ENCODE measurements at regions of chr20 and their contacts with region 1.

Region 1: DNA sequence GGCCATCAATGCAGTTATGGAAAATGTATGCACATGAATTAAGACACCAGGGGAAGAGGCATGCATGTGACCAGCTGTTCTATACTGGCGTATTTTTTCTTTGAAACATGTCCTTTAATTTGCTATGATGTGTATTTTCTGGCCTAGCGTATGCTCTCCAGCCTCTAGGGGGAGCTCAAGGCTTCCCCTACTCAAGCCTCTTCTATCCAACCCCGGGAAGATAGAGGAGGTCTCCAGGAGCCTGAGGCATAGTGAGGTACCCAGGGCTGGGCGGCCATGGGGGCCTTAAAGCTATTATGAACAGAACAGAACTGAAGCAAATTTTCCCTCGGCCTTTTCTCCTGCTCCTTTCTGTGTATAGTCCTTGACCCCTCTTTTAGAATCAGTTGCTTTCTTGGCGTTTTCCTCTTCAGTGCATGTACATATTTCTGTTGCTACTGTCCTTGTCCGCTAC is 528.9 kb downstream of the MAFB start:
- DNase-seq: peak; percentile 78
- H3K4me3 Mint-ChIP-seq: no peak overlapping the region
- H3K27ac Mint-ChIP-seq: no peak overlapping the region
- H3K4me1 Mint-ChIP-seq: no peaks in the 10 kb centered on the region
- H3K27me3 Mint-ChIP-seq: no peaks in the 10 kb centered on the region
- CTCF ChIP-seq: peak; percentile 78

Region 2: GRCh38 chr20:39070484-39071231 is 1089.5 kb before region 1 on chr20:
- CTCF ChIA-PET with region 1: no interaction called
- POLR2A ChIA-PET with region 1: no interaction called
- intact Hi-C with region 1: no loop called
- DNase-seq: peak; percentile 71
- H3K4me3 Mint-ChIP-seq: no peak overlapping the region
- H3K27ac Mint-ChIP-seq: no peak overlapping the region
- H3K4me1 Mint-ChIP-seq: peaks cover 16% of the 10 kb centered on the region
- H3K27me3 Mint-ChIP-seq: peaks cover 13% of the 10 kb centered on the region
- CTCF ChIP-seq: no peak

Region 3: DNA sequence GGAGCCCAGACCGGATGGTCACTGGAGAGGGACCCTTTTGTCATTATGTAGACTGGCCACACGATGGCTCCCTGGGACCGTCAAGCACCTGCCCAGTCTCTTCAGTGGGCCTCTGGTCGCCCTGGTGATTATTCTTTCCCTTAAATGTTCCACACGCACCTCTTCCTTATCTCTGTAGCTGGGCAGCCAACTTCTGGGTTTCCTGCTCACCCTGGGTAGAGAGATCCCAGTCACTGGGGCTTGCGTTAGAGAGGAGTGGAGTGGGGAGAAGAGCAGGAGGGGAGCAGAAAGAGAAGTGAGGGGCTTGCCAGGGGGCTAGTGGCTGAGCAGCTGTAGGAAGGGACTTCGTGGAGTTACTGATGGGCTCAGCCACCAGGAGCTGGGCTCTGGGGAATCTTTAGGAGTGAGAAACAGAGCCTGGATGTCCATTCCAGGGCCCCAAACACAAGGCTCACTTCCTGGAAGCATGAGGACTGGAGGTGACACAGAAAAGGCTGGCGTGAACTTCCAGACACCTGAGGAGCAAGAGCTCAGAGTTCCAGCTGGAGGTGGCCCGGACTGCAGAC is 1047.9 kb before region 1 on chr20:
- CTCF ChIA-PET with region 1: interaction called, 8 read pairs
- POLR2A ChIA-PET with region 1: no interaction called
- intact Hi-C with region 1: loop called (anchors 10 kb)
- DNase-seq: peak; percentile 50
- H3K4me3 Mint-ChIP-seq: no peak overlapping the region
- H3K27ac Mint-ChIP-seq: no peak overlapping the region
- H3K4me1 Mint-ChIP-seq: peaks cover 5% of the 10 kb centered on the region
- H3K27me3 Mint-ChIP-seq: peaks cover 36% of the 10 kb centered on the region
- CTCF ChIP-seq: peak; percentile 88

Region 4: DNA sequence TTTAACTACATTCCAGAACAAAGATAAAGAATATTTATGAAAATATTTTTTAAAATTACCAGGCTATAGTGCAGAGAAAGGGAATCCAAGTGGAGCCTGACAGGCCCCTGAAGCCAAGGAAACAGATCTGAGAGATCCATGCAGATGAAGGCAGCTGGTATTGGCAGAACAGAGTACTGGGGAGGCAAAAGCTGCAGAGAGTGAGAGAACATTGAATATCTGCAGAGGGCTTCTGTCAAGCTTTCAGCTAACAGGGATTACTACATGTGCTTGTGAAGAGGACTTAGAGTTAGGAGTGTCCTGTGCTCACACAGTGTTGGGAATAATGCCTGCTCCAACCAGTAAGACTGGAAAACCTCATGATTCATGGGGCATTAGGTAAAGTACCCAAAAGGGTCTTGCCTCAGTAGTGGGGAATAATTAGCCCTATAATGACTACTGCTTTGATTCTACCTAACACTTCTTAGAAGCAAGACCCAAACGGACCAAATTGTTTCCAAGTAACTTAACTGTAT is 540.8 kb before region 1 on chr20:
- CTCF ChIA-PET with region 1: no interaction called
- POLR2A ChIA-PET with region 1: no interaction called
- intact Hi-C with region 1: no loop called
- DNase-seq: no peak
- H3K4me3 Mint-ChIP-seq: no peak overlapping the region
- H3K27ac Mint-ChIP-seq: no peak overlapping the region
- H3K4me1 Mint-ChIP-seq: peaks cover 17% of the 10 kb centered on the region
- H3K27me3 Mint-ChIP-seq: no peaks in the 10 kb centered on the region
- CTCF ChIP-seq: no peak

Region 5: GRCh38 chr20:40046703-40047102 is 113.4 kb before region 1 on chr20:
- CTCF ChIA-PET with region 1: no interaction called
- POLR2A ChIA-PET with region 1: no interaction called
- intact Hi-C with region 1: no loop called
- DNase-seq: no peak
- H3K4me3 Mint-ChIP-seq: no peak overlapping the region
- H3K27ac Mint-ChIP-seq: no peak overlapping the region
- H3K4me1 Mint-ChIP-seq: peaks cover 6% of the 10 kb centered on the region
- H3K27me3 Mint-ChIP-seq: no peaks in the 10 kb centered on the region
- CTCF ChIP-seq: no peak

Region 6: DNA sequence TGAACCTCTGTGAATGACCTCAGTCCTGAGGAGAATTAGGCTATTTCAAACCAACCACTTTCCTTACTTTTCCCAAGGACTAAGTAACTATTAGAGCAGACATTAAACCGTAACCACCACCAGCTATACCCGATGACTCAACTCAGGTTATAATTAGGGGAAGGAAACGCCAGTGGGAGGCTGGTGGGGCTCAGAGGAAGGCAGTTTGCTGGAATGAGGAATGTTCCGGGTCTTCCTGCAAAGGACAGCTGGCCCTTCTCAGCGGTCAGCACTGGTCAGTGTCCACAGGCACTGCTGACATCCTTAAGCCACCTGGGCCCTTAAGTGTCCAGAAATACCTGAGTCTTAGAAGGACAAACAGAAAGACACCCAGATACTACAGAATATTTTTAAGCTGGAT is 13.7 kb after region 1 on chr20:
- CTCF ChIA-PET with region 1: interaction called, 29 read pairs
- POLR2A ChIA-PET with region 1: interaction called, 5 read pairs
- intact Hi-C with region 1: no loop called
- DNase-seq: no peak
- H3K4me3 Mint-ChIP-seq: no peak overlapping the region
- H3K27ac Mint-ChIP-seq: no peak overlapping the region
- H3K4me1 Mint-ChIP-seq: no peaks in the 10 kb centered on the region
- H3K27me3 Mint-ChIP-seq: no peaks in the 10 kb centered on the region
- CTCF ChIP-seq: no peak

Region 7: DNA sequence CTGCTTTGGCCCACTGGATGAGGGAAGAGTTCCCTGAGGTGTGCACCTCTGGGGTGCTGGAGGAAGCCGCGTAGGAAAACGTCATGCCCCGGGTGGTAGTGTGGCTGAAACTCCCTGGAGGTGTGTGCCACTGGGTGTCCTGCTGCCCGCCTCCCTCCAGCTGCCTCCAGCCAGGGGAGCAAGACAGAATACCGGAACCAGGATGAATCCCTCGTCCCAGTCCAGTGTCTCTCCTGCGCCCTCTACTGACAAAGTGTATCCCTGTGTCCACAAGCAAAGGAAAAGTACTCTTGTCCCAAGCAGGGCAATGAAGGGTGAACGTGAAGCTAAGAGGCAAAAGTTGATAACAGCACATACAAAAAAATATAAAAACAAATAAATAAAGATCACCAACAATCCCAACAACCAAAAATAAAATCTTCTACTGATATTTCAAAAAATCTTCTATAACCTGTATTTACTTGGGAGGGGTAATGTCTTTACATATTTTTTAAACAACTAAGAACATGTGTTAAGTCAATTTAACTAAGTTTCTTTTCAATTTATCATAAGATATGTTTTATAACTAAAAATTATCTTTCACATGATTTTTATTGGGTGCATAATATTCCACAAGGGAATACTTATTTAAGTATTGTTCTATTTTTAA is 91.3 kb after region 1 on chr20:
- CTCF ChIA-PET with region 1: interaction called, 10 read pairs
- POLR2A ChIA-PET with region 1: no interaction called
- intact Hi-C with region 1: loop called (anchors 10 kb)
- DNase-seq: peak; percentile 76
- H3K4me3 Mint-ChIP-seq: no peak overlapping the region
- H3K27ac Mint-ChIP-seq: no peak overlapping the region
- H3K4me1 Mint-ChIP-seq: peaks cover 8% of the 10 kb centered on the region
- H3K27me3 Mint-ChIP-seq: no peaks in the 10 kb centered on the region
- CTCF ChIP-seq: peak; percentile 52

Region 8: DNA sequence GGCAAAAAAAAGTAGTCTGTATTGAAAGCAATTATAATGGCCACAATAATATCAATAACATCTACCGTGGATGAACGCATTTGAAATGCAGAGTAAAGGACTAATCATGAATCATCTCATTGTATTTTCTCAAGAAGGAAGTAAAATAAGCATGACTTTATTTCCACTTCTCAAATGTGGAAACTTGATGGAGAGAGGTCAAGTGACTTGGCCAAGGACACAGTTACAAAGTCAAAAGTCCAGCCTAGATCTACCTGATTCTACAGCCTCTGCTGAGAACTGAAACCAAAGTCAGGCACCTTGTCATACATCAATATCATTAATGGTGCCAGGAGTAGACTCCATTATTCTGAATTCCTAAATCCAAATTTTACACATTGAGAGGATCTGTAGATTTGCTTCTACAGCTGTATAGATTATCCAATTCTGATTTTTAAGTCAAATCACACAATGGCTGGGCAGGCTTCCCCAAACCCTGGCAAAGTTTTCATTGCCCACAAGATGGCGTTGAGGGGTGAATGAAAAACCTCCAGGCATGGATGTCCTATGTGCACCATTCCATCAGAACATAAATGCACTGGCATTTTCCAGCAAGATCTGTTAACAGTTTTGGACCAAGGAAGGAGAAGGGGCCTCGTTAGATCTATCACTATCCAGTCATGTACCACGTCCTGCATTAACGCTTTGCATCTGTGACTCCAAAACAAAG is 105.9 kb after region 1 on chr20:
- CTCF ChIA-PET with region 1: interaction called, 13 read pairs
- POLR2A ChIA-PET with region 1: interaction called, 3 read pairs
- intact Hi-C with region 1: no loop called
- DNase-seq: peak; percentile 75
- H3K4me3 Mint-ChIP-seq: no peak overlapping the region
- H3K27ac Mint-ChIP-seq: no peak overlapping the region
- H3K4me1 Mint-ChIP-seq: peaks cover 4% of the 10 kb centered on the region
- H3K27me3 Mint-ChIP-seq: no peaks in the 10 kb centered on the region
- CTCF ChIP-seq: peak; percentile 51

Region 9: DNA sequence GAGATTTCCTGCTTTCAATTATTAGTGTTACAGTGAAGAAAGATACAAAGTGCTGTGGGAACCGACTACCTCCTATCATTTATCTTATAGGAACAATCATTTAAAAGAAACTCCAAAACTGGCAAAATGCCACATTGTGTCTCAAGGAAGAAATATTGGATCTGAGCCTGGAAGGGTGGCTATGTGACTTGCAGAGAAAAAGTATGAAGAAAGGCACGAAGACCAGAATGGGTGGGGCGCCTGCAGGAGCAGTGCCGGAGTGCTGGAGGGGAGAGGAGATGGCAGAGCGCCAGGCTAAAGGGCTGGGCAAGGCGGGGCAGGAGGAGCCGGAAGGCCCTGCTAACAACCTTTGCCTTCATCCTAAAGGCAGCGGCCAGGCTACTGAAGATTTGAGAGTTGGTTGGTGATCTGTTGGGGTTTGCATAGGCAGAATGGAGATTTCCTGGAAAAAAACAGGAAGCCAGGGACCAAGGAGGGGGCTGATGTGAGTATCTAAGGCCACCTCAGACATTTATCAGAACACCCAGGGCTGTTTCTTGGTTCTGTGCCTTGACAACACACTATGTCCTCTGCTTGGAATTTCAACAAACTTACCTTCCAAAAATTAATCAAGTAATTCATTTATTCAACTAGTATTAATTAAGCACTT is 403.3 kb after region 1 on chr20:
- CTCF ChIA-PET with region 1: interaction called, 8 read pairs
- POLR2A ChIA-PET with region 1: no interaction called
- intact Hi-C with region 1: loop called (anchors 1 kb)
- DNase-seq: peak; percentile 97
- H3K4me3 Mint-ChIP-seq: peak overlapping the region; percentile 2
- H3K27ac Mint-ChIP-seq: peak overlapping the region; percentile 81
- H3K4me1 Mint-ChIP-seq: peaks cover 40% of the 10 kb centered on the region
- H3K27me3 Mint-ChIP-seq: no peaks in the 10 kb centered on the region
- CTCF ChIP-seq: no peak

Region 10: DNA sequence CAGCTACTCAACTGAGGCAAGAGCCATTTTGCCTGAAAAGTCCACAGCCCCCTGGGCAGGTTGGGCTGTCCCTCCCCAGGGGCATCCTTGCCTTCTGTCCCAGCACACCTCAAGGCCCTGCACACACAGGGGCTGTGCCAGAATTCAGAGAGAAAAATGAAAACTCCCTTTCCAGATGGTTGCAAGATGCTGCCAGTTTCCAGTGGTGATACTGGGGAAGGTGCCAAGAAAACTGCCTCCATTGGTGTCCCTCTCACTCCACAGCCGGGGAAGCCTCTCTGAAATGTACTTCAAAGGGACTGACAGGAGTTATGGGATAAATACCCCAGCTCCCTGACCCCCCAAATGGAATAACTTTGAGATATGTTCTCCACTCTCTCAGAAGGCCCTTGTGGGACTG is 683.1 kb after region 1 on chr20:
- CTCF ChIA-PET with region 1: no interaction called
- POLR2A ChIA-PET with region 1: no interaction called
- intact Hi-C with region 1: no loop called
- DNase-seq: peak; percentile 1
- H3K4me3 Mint-ChIP-seq: no peak overlapping the region
- H3K27ac Mint-ChIP-seq: no peak overlapping the region
- H3K4me1 Mint-ChIP-seq: no peaks in the 10 kb centered on the region
- H3K27me3 Mint-ChIP-seq: no peaks in the 10 kb centered on the region
- CTCF ChIP-seq: no peak

Region 11: DNA sequence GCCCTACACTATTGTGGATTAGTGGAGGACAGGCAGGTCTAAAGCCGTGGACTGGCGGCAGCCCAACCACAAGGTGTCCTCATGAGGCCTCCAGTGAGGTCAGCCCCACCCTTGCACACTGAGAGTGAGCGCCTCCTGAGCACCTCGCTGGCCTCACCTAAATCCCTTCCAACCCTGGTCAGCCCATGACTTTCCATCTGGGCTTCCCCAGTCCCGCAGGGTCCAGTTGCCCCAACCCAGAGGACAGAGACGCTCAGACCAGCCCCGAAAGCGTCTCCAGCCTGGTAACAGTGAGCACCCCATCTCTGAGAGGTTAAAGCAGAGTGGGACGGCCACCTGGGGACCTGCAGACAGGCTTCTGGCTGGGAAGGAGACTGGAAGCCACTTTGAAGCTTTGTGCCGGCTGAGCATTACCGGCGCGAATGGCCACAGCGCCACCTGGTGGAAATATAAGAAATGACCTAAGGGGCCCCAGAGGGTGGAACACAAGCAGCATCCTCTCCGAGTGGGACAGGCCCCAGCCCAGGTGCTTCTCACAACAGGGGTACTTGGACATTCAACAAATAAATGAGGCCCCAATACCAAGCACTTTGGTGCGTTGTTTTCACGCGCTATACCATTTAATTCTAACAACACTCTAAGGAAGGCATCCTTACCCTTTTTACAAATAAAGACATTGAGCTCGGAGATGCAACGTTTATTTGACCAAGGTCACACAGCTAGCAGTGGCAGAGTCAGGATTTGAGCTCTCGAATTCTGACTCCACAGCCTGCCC is 802.8 kb after region 1 on chr20:
- CTCF ChIA-PET with region 1: interaction called, 47 read pairs
- POLR2A ChIA-PET with region 1: no interaction called
- intact Hi-C with region 1: loop called (anchors 1 kb)
- DNase-seq: peak; percentile 71
- H3K4me3 Mint-ChIP-seq: no peak overlapping the region
- H3K27ac Mint-ChIP-seq: no peak overlapping the region
- H3K4me1 Mint-ChIP-seq: peaks cover 20% of the 10 kb centered on the region
- H3K27me3 Mint-ChIP-seq: no peaks in the 10 kb centered on the region
- CTCF ChIP-seq: peak; percentile 84